Adrenal gland (tissue), 19 donors: ENCODE measurements at regions of chr11 and their contacts with region 1.

Region 1: DNA sequence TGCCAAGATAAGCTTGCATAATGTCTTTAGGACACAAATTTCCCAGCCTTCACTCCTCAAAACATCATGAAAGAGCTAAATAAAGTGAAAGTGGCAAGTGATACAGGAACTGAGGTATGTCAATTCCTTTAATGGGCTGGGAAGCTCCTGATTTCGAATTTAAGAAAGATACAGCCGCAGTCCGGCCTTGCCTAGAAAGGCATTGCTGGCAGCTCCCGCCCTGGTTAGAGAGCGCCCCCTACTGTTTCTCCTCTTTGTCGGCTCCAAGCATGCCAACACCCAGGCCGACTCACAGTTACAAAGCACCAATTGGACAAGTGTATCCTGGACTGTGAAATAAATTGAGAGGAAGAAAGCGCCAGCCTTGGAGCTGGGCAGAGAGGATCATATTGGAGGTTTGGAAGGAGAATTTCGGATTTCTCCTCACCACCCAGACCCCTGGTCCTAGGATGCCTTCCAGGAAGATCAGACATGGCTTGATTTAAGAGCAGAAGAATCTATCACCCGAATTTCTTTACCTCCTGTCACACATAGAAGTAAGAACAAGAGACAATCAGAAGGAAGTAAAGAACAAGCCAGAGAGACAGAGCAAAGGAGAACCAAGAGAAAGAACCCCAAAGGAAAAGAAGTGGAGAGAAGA is 84.0 kb downstream of the FAM76B start:
- DNase-seq: peak; percentile 88 to 95 (median 90)
- H3K4me3 ChIP-seq: no peak overlapping the region
- H3K27ac ChIP-seq: peak overlapping the region in 2 of 5 donors; percentile 9 to 58
- H3K4me1 ChIP-seq: peaks cover 0 to 21% of the 10 kb centered on the region in 2 donors
- H3K27me3 ChIP-seq: no peaks in the 10 kb centered on the region
- CTCF ChIP-seq: peak; percentile 92 to 97 (median 94)
- POLR2A ChIP-seq: no peak

Region 2: DNA sequence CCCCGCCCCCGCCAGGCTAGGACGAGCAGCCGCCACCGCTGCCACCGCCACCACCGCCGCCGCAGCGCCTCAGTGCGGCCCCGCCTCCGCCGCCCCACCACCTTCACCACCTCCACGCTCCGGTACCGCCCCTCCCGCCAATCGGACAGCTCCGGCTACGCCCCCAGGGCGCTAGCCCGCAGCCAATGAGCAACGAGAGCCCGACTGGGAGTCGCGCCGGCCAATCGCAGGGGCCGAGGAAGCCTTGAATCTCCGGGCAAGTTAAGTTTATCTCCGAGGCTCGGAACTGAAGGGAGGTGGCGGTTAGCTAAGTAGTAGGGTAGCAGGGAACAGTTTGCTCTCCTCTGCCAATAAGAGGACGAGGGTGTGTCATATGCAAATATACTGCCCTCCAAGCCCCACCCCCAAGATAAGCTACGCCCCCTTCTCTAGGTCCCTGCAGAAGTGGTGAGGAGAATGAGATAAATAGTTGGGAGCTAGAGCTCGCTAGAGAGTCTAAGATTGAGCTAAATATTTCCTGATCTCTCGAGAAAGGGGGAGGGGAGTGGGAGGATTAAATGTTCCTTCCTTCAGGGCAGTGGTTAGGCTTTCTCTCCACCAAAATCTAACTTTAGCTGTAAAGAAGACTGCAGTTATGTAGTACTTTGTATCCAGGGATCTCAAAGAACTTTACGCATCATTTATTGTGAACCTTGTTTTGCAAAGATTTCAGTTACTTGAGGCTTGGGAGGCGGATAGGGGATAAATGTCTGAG is 474.3 kb before region 1 on chr11 and contains the start of gene SESN3:
- intact Hi-C with region 1: loop called in 1 of 2 experiments (anchors 10 kb)
- DNase-seq: peak; percentile 99 to 100 (median 99)
- H3K4me3 ChIP-seq: peak within 1 kb of the TSS; percentile 38 to 92 (median 76)
- H3K27ac ChIP-seq: peak within 1 kb of the TSS; percentile 55 to 95 (median 92)
- H3K4me1 ChIP-seq: peaks cover 5 to 43% of the 10 kb centered on the region in 2 donors
- H3K27me3 ChIP-seq: no peaks in the 10 kb centered on the region
- CTCF ChIP-seq: peak in 2 of 6 experiments; percentile 7 to 8
- POLR2A ChIP-seq: peak; percentile 72 to 96
- total RNA-seq, gene SESN3: 30.1 to 90.0 (median 41.8) TPM